ENCODE measurements at regions of chr17 and their contacts with region 1.

Region 1: GRCh38 chr17:40862985-40863733 is 3.9 kb downstream of the KRT12 start:
- DNase-seq: no peak
- H3K4me3 ChIP-seq: no peak overlapping the region
- H3K27ac ChIP-seq: no peak overlapping the region
- H3K4me1 ChIP-seq: no peaks in the 10 kb centered on the region
- H3K27me3 ChIP-seq: no peaks in the 10 kb centered on the region
- CTCF ChIP-seq: no peak

Region 2: GRCh38 chr17:40602775-40603551 is 260.2 kb before region 1 on chr17:
- CTCF ChIA-PET with region 1: no interaction called
- dilution Hi-C with region 1: loop called (anchors 10 kb)
- in situ Hi-C with region 1: no loop called
- intact Hi-C with region 1: no loop called
- DNase-seq: no peak
- H3K4me3 ChIP-seq: no peak overlapping the region
- H3K27ac ChIP-seq: no peak overlapping the region
- H3K4me1 ChIP-seq: no peaks in the 10 kb centered on the region
- H3K27me3 ChIP-seq: no peaks in the 10 kb centered on the region
- CTCF ChIP-seq: no peak